Sigmoid colon (tissue), 7 donors: ENCODE measurements at regions of chr12 and their contacts with region 1.

Region 1: GRCh38 chr12:111942557-111942956 is 70.4 kb downstream of the TMEM116 start:
- DNase-seq: no peak
- H3K4me3 ChIP-seq: no peak overlapping the region
- H3K27ac ChIP-seq: peak overlapping the region in 3 of 4 donors; percentile 3 to 50 (median 43)
- H3K4me1 ChIP-seq: peaks cover 0 to 19% (median 14%) of the 10 kb centered on the region in 4 donors
- H3K27me3 ChIP-seq: no peaks in the 10 kb centered on the region
- CTCF ChIP-seq: no peak
- EP300 ChIP-seq: no peak
- POLR2A ChIP-seq: no peak

Region 2: GRCh38 chr12:111904446-111904975 is 38.0 kb before region 1 on chr12:
- intact Hi-C with region 1: no loop called
- DNase-seq: no peak
- H3K4me3 ChIP-seq: no peak overlapping the region
- H3K27ac ChIP-seq: no peak overlapping the region
- H3K4me1 ChIP-seq: no peaks in the 10 kb centered on the region
- H3K27me3 ChIP-seq: no peaks in the 10 kb centered on the region
- CTCF ChIP-seq: no peak
- EP300 ChIP-seq: no peak
- POLR2A ChIP-seq: no peak

Region 3: DNA sequence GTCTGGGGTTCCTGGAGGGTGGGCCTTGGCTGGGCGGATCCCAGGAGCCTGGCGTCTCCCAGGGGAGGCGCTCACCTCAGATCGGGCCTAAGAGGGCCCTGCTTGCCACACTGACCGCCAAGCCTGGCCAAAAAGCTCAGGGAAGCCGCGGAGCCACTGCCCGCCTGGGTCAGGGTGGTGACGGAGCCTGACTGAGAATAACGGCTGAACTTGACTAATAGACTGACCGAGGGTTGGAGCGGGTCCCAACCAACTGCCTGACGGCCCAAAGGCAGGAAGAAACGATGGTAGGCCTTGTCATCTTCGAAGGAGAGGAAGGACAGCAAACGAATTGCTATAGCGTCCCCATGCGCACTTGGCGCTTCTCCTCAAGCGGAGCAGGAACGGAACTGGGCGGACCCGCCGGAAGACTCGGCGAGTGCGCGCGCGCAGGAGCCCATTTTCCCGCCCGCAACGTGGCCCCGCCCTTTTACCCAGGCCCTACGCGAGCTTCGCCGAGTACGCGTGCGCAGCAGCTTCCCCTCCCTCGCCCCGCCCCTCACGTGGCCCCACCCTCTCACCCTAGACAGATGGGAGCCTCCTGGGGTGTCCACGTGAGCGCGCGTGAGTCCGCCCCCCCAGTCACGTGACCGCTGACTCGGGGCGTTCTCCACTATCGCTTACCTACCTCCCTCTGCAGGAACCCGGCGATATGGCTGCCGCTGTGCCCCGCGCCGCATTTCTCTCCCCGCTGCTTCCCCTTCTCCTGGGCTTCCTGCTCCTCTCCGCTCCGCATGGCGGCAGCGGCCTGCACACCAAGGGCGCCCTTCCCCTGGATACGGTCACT is 70.4 kb after region 1 on chr12 and contains the starts of genes ERP29 and TMEM116:
- intact Hi-C with region 1: loop called (anchors 5 kb)
- DNase-seq: peak; percentile 100
- H3K4me3 ChIP-seq: peak within 1 kb of the TSS; percentile 83 to 100 (median 95)
- H3K27ac ChIP-seq: peak within 1 kb of the TSS; percentile 92 to 97 (median 96)
- H3K4me1 ChIP-seq: peaks cover 0 to 41% (median 29%) of the 10 kb centered on the region in 4 donors
- H3K27me3 ChIP-seq: no peaks in the 10 kb centered on the region
- CTCF ChIP-seq: peak; percentile 52 to 85 (median 70)
- EP300 ChIP-seq: peak in 2 of 4 donors; percentile 8 to 91
- POLR2A ChIP-seq: peak; percentile 96 to 97
- total RNA-seq, gene ERP29: 43.0 to 74.4 (median 54.3) TPM
- total RNA-seq, gene TMEM116: 7.5 to 16.6 (median 9.5) TPM

Region 4: GRCh38 chr12:112046003-112046402 is 103.4 kb after region 1 on chr12:
- intact Hi-C with region 1: no loop called
- DNase-seq: peak; percentile 80
- H3K4me3 ChIP-seq: no peak overlapping the region
- H3K27ac ChIP-seq: peak overlapping the region; percentile 68 to 88 (median 82)
- H3K4me1 ChIP-seq: peaks cover 0 to 65% (median 24%) of the 10 kb centered on the region in 4 donors
- H3K27me3 ChIP-seq: no peaks in the 10 kb centered on the region
- CTCF ChIP-seq: no peak
- EP300 ChIP-seq: peak; percentile 72 to 97 (median 86)
- POLR2A ChIP-seq: no peak

Region 5: GRCh38 chr12:112161711-112162110 is 219.2 kb after region 1 on chr12:
- intact Hi-C with region 1: loop called (anchors 10 kb)
- DNase-seq: peak; percentile 15
- H3K4me3 ChIP-seq: no peak overlapping the region
- H3K27ac ChIP-seq: no peak overlapping the region
- H3K4me1 ChIP-seq: no peaks in the 10 kb centered on the region
- H3K27me3 ChIP-seq: no peaks in the 10 kb centered on the region
- CTCF ChIP-seq: no peak
- EP300 ChIP-seq: no peak
- POLR2A ChIP-seq: no peak